T-cell (primary cell): ENCODE measurements at regions of chr17 and their contacts with region 1.

Region 1: GRCh38 chr17:45431531-45432404 is 902 bp downstream of the ARHGAP27 start:
- DNase-seq: peak; percentile 32 to 75 (median 58)
- ATAC-seq: peak; percentile 63 to 67 (median 65)
- H3K4me3 ChIP-seq: peak overlapping the region; percentile 63 to 79
- H3K4me3 Mint-ChIP-seq: peak overlapping the region; percentile 71 to 82 (median 80)
- H3K27ac ChIP-seq: no peak overlapping the region
- H3K27ac Mint-ChIP-seq: no peak overlapping the region
- H3K4me1 ChIP-seq: peaks cover 2 to 45% of the 10 kb centered on the region in 2 experiments
- H3K4me1 Mint-ChIP-seq: peaks cover 23 to 28% (median 25%) of the 10 kb centered on the region in 3 donors
- H3K27me3 ChIP-seq: peaks cover 0 to 7% of the 10 kb centered on the region in 2 experiments
- H3K27me3 Mint-ChIP-seq: no peaks in the 10 kb centered on the region

Region 2: DNA sequence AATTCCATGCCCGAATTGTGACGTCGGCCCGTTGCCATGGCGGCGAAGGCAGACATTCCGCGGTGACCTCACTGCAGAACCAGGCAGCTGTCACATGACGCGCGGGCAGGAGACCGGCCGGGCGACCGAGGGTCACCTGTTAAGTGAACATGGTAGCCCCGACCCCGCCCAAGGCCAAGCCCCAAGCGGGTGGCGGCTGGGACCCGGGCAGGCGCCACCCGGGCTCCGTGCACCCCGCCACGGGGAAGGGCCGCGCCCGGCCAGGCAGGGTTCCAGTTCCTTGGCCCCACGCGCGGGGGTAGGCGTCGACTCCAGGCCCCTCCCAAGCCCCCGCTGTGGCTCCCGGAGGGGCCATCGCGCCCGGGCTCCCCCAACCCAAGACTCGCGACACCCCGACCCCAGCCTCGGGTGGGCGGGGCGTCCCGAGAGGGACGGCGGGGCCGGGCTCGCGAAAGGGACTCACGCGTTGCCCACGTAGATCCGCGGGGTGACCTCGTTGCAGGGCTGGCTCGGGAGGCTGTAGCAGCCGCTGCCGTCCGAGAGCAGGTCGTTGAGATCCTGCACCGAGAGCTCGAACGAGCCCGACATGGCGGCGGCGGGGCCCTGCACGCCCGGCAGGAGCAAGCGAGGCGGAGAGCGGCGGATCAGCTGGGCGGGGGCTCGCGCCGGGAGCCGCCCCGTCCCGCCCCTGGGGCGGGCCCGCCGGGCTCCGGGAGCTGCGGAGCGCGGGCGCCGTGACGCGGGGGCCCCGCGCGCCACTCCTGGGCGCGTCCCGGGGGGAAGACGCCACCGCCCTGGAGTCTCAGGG is 1653.2 kb before region 1 on chr17 and contains the start of gene DUSP3:
- CTCF ChIA-PET with region 1: no interaction called
- POLR2A ChIA-PET with region 1: interaction called in 1 of 2 experiments, 10 read pairs
- DNase-seq: peak; percentile 45 to 85 (median 68)
- ATAC-seq: peak; percentile 97 to 99 (median 98)
- H3K4me3 ChIP-seq: peak within 1 kb of the TSS; percentile 67 to 76
- H3K4me3 Mint-ChIP-seq: peak within 1 kb of the TSS; percentile 79 to 87 (median 82)
- H3K27ac ChIP-seq: peak within 1 kb of the TSS; percentile 14
- H3K27ac Mint-ChIP-seq: peak within 1 kb of the TSS; percentile 3 to 77
- H3K4me1 ChIP-seq: peaks cover 3 to 14% of the 10 kb centered on the region in 2 experiments
- H3K4me1 Mint-ChIP-seq: peaks cover 0 to 14% (median 9%) of the 10 kb centered on the region in 3 donors
- H3K27me3 ChIP-seq: peaks cover 0 to 26% of the 10 kb centered on the region in 2 experiments
- H3K27me3 Mint-ChIP-seq: peaks cover 19 to 29% of the 10 kb centered on the region in 2 donors
- total RNA-seq, gene DUSP3: 8.1 to 9.8 (median 9.6) TPM

Region 3: GRCh38 chr17:45287526-45288500 is 144.0 kb before region 1 on chr17:
- CTCF ChIA-PET with region 1: no interaction called
- POLR2A ChIA-PET with region 1: interaction called in 1 of 2 experiments, 15 read pairs
- DNase-seq: no peak
- ATAC-seq: no peak
- H3K4me3 ChIP-seq: no peak overlapping the region
- H3K4me3 Mint-ChIP-seq: no peak overlapping the region
- H3K27ac ChIP-seq: no peak overlapping the region
- H3K27ac Mint-ChIP-seq: no peak overlapping the region
- H3K4me1 ChIP-seq: peaks cover 0 to 12% of the 10 kb centered on the region in 2 experiments
- H3K4me1 Mint-ChIP-seq: peaks cover 5 to 20% (median 14%) of the 10 kb centered on the region in 3 donors
- H3K27me3 ChIP-seq: no peaks in the 10 kb centered on the region
- H3K27me3 Mint-ChIP-seq: no peaks in the 10 kb centered on the region

Region 4: DNA sequence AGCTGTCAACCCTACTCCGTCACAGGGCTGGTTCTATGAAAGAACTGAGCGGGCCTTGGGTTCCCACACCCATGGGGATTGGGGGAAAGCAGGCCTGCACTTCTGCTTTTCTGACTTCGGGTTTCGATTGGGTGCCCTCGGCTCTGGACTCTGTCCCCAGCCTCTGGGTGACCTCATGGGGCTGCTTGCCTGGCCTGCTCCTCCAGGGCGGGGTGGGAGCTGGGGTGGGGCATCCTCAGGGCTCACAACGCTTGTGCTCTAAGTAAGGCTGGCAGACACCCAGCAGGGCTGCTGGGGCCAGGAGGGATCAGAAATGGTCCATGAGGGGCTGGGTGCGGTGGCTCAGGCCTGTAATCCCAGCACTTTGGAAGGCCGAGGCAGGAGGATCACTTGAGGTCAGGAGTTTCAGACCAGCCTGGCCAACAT is 18.3 kb before region 1 on chr17:
- CTCF ChIA-PET with region 1: no interaction called
- POLR2A ChIA-PET with region 1: interaction called in 1 of 2 experiments, 10 read pairs
- DNase-seq: peak in 1 of 35 experiments; percentile 39
- ATAC-seq: no peak
- H3K4me3 ChIP-seq: no peak overlapping the region
- H3K4me3 Mint-ChIP-seq: no peak overlapping the region
- H3K27ac ChIP-seq: no peak overlapping the region
- H3K27ac Mint-ChIP-seq: no peak overlapping the region
- H3K4me1 ChIP-seq: peaks cover 7 to 37% of the 10 kb centered on the region in 2 experiments
- H3K4me1 Mint-ChIP-seq: peaks cover 28 to 42% (median 40%) of the 10 kb centered on the region in 3 donors
- H3K27me3 ChIP-seq: no peaks in the 10 kb centered on the region
- H3K27me3 Mint-ChIP-seq: no peaks in the 10 kb centered on the region

Region 5: DNA sequence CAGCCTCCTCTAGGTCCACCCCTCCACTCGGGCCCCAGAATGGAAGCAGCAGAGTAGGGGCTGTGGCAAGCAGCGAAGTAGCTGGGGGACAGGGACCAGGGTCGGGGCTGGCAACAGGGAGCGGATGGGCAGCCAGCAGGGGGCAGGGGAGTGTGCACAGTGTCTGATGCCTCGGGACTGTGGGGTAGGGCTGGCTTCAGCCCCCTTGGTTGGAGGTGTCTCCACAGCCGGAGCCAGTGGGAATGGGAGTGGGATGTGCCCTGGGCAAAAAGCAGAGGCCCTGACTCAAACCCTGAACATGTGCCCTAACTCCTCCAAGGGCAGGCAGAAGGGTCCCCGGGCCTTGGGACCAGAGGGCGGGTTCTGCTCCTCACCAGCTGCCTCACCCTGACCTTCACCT is 19.4 kb after region 1 on chr17:
- CTCF ChIA-PET with region 1: no interaction called
- POLR2A ChIA-PET with region 1: no interaction called
- DNase-seq: no peak
- ATAC-seq: no peak
- H3K4me3 ChIP-seq: no peak overlapping the region
- H3K4me3 Mint-ChIP-seq: no peak overlapping the region
- H3K27ac ChIP-seq: no peak overlapping the region
- H3K27ac Mint-ChIP-seq: no peak overlapping the region
- H3K4me1 ChIP-seq: peaks cover 3 to 13% of the 10 kb centered on the region in 2 experiments
- H3K4me1 Mint-ChIP-seq: peaks cover 0 to 9% (median 4%) of the 10 kb centered on the region in 3 donors
- H3K27me3 ChIP-seq: no peaks in the 10 kb centered on the region
- H3K27me3 Mint-ChIP-seq: no peaks in the 10 kb centered on the region